ENCODE measurements at regions of chr1 and their contacts with region 1.

Region 1: DNA sequence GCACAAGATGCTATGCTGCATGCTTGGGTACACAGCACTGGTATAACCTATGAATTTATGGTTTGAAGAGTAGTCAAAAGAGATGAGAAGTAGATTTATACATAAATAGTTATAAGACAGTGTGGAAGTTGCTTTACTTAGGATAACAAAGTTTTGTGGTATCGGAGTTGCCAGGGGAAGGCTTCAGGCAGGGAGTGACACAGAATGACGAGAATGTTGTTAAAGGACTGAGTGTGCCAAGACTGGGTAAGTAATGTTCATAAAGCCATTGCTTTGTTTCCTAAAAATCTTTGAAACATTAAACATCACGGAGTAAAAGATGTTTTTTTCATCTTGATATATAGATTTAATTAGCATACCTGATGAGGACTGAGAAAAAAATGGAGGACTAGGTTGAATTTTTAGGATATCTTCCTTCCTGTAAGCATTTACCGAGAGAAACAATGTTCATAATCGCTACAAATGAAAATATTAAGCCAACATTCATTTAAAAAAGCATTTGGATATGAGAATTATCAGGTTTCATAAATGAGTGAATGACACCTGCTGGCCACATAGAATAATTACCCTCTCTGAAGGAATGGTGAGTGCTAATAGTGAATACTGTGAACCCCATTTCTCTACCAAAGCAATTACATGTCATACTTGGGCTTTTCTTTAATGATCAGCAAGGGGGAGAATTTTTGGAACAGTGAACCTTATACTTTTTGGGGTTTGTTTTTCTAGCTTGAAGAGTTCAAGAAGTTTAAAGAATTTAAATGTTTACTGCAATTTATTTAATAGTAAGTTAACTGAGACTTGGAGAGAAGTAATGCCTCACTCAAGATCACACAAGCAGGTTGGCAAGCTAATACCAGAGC is 28.4 kb downstream of the EXTL2 start:
- DNase-seq: peak; percentile 40
- ATAC-seq: no peak
- H3K4me3 ChIP-seq: no peak overlapping the region
- H3K4me3 Mint-ChIP-seq: no peak overlapping the region
- H3K27ac ChIP-seq: no peak overlapping the region
- H3K27ac Mint-ChIP-seq: no peak overlapping the region
- H3K4me1 ChIP-seq: no peaks in the 10 kb centered on the region
- H3K4me1 Mint-ChIP-seq: no peaks in the 10 kb centered on the region
- H3K27me3 ChIP-seq: peaks cover 0 to 6% (median 2%) of the 10 kb centered on the region in 4 experiments
- H3K27me3 Mint-ChIP-seq: no peaks in the 10 kb centered on the region
- CTCF ChIP-seq: peak; percentile 74

Region 2: GRCh38 chr1:99180343-99180808 is 1685.9 kb before region 1 on chr1:
- CTCF ChIA-PET with region 1: interaction called, 12 read pairs
- POLR2A ChIA-PET with region 1: no interaction called
- intact Hi-C with region 1: no loop called
- DNase-seq: peak; percentile 60
- ATAC-seq: peak; percentile 76
- H3K4me3 ChIP-seq: no peak overlapping the region
- H3K4me3 Mint-ChIP-seq: no peak overlapping the region
- H3K27ac ChIP-seq: no peak overlapping the region
- H3K27ac Mint-ChIP-seq: no peak overlapping the region
- H3K4me1 ChIP-seq: no peaks in the 10 kb centered on the region
- H3K4me1 Mint-ChIP-seq: no peaks in the 10 kb centered on the region
- H3K27me3 ChIP-seq: no peaks in the 10 kb centered on the region
- H3K27me3 Mint-ChIP-seq: no peaks in the 10 kb centered on the region
- CTCF ChIP-seq: peak; percentile 94

Region 3: DNA sequence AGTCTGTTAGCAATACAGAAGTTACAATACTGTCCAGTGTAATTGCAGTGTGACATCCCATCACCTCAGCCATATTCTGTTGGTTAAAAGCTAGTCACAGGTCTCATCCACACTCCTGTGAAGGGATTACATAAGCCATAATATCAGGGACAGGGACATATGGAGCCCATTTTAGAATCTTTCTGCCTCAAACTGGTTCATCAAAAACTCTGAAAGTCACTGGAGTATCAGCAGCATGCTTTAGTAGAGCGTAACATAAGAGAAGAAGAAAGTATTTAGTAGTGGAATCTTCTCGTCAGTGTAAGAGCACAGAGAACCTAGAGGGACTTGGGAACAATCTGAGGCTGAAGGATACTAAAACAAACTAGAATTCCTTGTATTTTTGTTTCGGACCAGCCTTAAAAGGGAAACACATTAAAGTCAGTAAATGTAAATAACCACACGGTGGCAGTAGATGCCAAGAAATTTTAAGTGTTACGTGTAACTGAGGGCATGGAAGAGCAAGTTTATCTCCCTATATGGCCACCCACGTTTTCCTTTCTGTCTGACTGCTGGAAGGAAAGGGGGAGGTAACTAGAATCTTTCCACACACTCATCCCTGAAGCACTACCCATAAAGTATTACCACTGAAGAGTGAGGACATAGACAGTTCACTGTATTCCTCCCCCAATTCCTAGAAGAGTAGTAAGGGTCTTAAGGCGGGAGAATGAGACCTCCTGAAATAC is 1057.7 kb before region 1 on chr1:
- CTCF ChIA-PET with region 1: interaction called, 21 read pairs
- POLR2A ChIA-PET with region 1: no interaction called
- intact Hi-C with region 1: no loop called
- DNase-seq: peak; percentile 78
- ATAC-seq: peak; percentile 56
- H3K4me3 ChIP-seq: no peak overlapping the region
- H3K4me3 Mint-ChIP-seq: no peak overlapping the region
- H3K27ac ChIP-seq: no peak overlapping the region
- H3K27ac Mint-ChIP-seq: no peak overlapping the region
- H3K4me1 ChIP-seq: peaks cover 0 to 6% of the 10 kb centered on the region in 2 donors
- H3K4me1 Mint-ChIP-seq: peaks cover 4% of the 10 kb centered on the region
- H3K27me3 ChIP-seq: peaks cover 0 to 4% (median 2%) of the 10 kb centered on the region in 4 experiments
- H3K27me3 Mint-ChIP-seq: peaks cover 31% of the 10 kb centered on the region
- CTCF ChIP-seq: peak; percentile 85

Region 4: GRCh38 chr1:100606438-100606837 is 259.8 kb before region 1 on chr1:
- CTCF ChIA-PET with region 1: interaction called, 3 read pairs
- POLR2A ChIA-PET with region 1: no interaction called
- intact Hi-C with region 1: loop called (anchors 1 kb)
- DNase-seq: peak; percentile 18
- ATAC-seq: no peak
- H3K4me3 ChIP-seq: no peak overlapping the region
- H3K4me3 Mint-ChIP-seq: no peak overlapping the region
- H3K27ac ChIP-seq: no peak overlapping the region
- H3K27ac Mint-ChIP-seq: no peak overlapping the region
- H3K4me1 ChIP-seq: no peaks in the 10 kb centered on the region
- H3K4me1 Mint-ChIP-seq: no peaks in the 10 kb centered on the region
- H3K27me3 ChIP-seq: peaks cover 0 to 3% (median 0%) of the 10 kb centered on the region in 4 experiments
- H3K27me3 Mint-ChIP-seq: peaks cover 17% of the 10 kb centered on the region
- CTCF ChIP-seq: no peak

Region 5: DNA sequence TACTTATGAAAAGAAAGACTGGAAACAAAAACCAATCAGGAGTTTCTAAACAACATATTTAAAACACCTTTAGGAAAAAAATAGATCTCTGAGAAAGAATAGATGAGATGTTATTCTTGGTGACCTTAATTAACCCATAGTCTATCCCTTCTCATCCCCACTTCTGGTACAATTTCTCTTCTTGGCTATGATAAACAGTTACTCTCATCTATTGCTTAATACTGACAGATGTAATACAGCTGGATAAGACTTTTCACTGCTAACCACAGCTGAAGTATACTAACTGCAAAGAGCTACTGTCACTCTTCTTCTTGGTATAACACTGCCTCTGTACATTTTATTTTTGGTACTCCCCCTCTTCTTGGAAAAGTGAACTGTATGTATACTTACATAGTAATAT is 13.2 kb after region 1 on chr1:
- CTCF ChIA-PET with region 1: interaction called, 14 read pairs
- POLR2A ChIA-PET with region 1: no interaction called
- intact Hi-C with region 1: no loop called
- DNase-seq: no peak
- ATAC-seq: no peak
- H3K4me3 ChIP-seq: no peak overlapping the region
- H3K4me3 Mint-ChIP-seq: no peak overlapping the region
- H3K27ac ChIP-seq: no peak overlapping the region
- H3K27ac Mint-ChIP-seq: no peak overlapping the region
- H3K4me1 ChIP-seq: no peaks in the 10 kb centered on the region
- H3K4me1 Mint-ChIP-seq: no peaks in the 10 kb centered on the region
- H3K27me3 ChIP-seq: no peaks in the 10 kb centered on the region
- H3K27me3 Mint-ChIP-seq: no peaks in the 10 kb centered on the region
- CTCF ChIP-seq: no peak

Region 6: GRCh38 chr1:100941098-100941527 is 74.8 kb after region 1 on chr1:
- CTCF ChIA-PET with region 1: no interaction called
- POLR2A ChIA-PET with region 1: no interaction called
- intact Hi-C with region 1: no loop called
- DNase-seq: no peak
- ATAC-seq: no peak
- H3K4me3 ChIP-seq: no peak overlapping the region
- H3K4me3 Mint-ChIP-seq: no peak overlapping the region
- H3K27ac ChIP-seq: no peak overlapping the region
- H3K27ac Mint-ChIP-seq: peak overlapping the region; percentile 1
- H3K4me1 ChIP-seq: peaks cover 14% of the 10 kb centered on the region in 2 donors
- H3K4me1 Mint-ChIP-seq: peaks cover 32% of the 10 kb centered on the region
- H3K27me3 ChIP-seq: no peaks in the 10 kb centered on the region
- H3K27me3 Mint-ChIP-seq: no peaks in the 10 kb centered on the region
- CTCF ChIP-seq: no peak

Region 7: GRCh38 chr1:101081496-101082488 is 215.5 kb after region 1 on chr1:
- CTCF ChIA-PET with region 1: no interaction called
- POLR2A ChIA-PET with region 1: no interaction called
- intact Hi-C with region 1: no loop called
- DNase-seq: no peak
- ATAC-seq: no peak
- H3K4me3 ChIP-seq: no peak overlapping the region
- H3K4me3 Mint-ChIP-seq: peak overlapping the region; percentile 1
- H3K27ac ChIP-seq: no peak overlapping the region
- H3K27ac Mint-ChIP-seq: peak overlapping the region; percentile 5
- H3K4me1 ChIP-seq: peaks cover 16 to 19% of the 10 kb centered on the region in 2 donors
- H3K4me1 Mint-ChIP-seq: peaks cover 43% of the 10 kb centered on the region
- H3K27me3 ChIP-seq: no peaks in the 10 kb centered on the region
- H3K27me3 Mint-ChIP-seq: no peaks in the 10 kb centered on the region
- CTCF ChIP-seq: no peak